ENCODE measurements at regions of chr3 and their contacts with region 1.

Region 1: DNA sequence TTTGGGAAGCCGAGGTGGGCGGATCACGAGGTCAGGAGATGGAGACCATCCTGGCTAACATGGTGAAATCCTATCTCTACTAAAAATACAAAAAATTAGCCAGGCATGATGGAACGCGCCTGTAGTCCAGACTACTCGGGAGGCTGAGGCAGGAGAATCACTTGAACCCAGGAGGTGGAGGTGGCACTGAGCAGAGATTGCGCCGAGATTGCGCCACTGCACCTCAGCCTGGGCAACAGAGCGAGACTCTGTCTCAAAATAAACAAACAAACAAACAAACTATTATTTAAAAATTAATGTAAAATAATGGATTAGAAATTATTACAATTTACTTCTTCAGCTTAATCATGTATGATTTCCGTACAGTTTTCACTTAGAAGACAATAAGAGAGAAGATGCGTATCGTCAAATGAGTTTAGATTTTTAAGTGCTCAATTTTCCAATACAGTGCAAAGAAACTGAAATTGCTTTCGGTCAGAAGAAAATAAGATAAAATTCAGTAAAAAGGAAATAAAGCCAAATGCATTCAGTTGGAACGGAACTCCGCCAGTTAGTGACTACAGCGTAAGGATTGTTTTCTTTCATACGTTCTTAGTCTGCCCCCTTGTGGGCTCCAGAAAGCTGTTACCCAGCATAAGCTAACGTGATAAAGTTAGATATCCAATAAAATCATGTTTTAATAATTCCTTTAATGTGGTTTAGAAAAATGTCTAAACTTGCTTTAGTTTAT is 24.8 kb downstream of the AADAC start:
- DNase-seq: peak; percentile 77
- ATAC-seq: peak; percentile 90
- H3K4me3 ChIP-seq: no peak overlapping the region; a peak in 1 of 6 replicates
- H3K27ac ChIP-seq: no peak overlapping the region
- H3K4me1 ChIP-seq: peaks cover 8% of the 10 kb centered on the region; the same call in 1 of the 2 replicates
- H3K27me3 ChIP-seq: no peaks in the 10 kb centered on the region
- CTCF ChIP-seq: peak; percentile 83
- EP300 ChIP-seq: no peak
- POLR2A ChIP-seq: no peak
- RAD21 ChIP-seq: peak; percentile 84

Region 2: GRCh38 chr3:151227807-151228665 is 610.7 kb before region 1 on chr3:
- CTCF ChIA-PET with region 1: no interaction called
- POLR2A ChIA-PET with region 1: no interaction called
- in situ Hi-C with region 1: no loop called
- intact Hi-C with region 1: loop called (anchors 1 kb)
- DNase-seq: peak; percentile 67
- ATAC-seq: peak; percentile 94
- H3K4me3 ChIP-seq: no peak overlapping the region
- H3K27ac ChIP-seq: no peak overlapping the region
- H3K4me1 ChIP-seq: peaks cover 34% of the 10 kb centered on the region
- H3K27me3 ChIP-seq: no peaks in the 10 kb centered on the region; a peak in 1 of 5 replicates
- CTCF ChIP-seq: peak; percentile 92
- EP300 ChIP-seq: no peak
- POLR2A ChIP-seq: no peak
- RAD21 ChIP-seq: peak; percentile 93

Region 3: GRCh38 chr3:151439652-151440129 is 399.1 kb before region 1 on chr3:
- CTCF ChIA-PET with region 1: interaction called, 34 read pairs
- POLR2A ChIA-PET with region 1: no interaction called
- in situ Hi-C with region 1: loop called (anchors 5 kb)
- intact Hi-C with region 1: loop called (anchors 1 kb)
- DNase-seq: peak; percentile 49
- ATAC-seq: peak; percentile 96
- H3K4me3 ChIP-seq: no peak overlapping the region
- H3K27ac ChIP-seq: no peak overlapping the region
- H3K4me1 ChIP-seq: no peaks in the 10 kb centered on the region
- H3K27me3 ChIP-seq: 0 out of 5 replicates have a peak, but pooled peaks cover 0 to 3% of the 10 kb centered on the region in 2 experiments
- CTCF ChIP-seq: peak; percentile 74
- EP300 ChIP-seq: no peak
- POLR2A ChIP-seq: no peak
- RAD21 ChIP-seq: peak; percentile 60

Region 4: DNA sequence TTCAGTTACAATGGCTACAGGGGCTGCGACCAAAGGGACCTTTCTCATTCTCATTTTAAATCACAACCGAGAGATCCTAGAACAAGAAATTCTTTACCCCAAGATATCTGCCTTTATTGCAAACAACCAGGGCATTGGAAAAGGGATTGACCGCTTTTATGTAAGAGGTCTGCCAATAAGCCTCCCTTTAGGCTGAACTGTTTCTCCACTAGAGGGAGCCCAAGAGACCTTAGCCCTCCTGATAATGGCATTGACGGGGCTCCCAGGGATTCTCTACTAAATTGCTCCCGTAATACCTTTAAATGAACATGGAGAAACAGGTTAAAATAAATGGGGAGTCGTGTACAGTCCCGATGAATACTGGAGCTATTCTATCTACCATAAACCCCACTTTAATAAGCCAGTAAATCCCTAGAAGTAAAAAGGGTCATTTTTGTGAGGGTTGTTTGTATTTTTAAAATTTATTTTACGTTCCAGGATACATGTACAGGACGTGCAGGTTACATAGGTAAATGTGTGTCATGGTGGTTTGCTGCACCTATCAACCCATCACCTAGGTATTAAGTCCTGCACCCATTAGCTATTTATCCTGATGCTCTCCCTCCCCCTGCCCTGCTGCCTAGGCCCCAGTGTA is 370.3 kb before region 1 on chr3:
- CTCF ChIA-PET with region 1: interaction called, 31 read pairs
- POLR2A ChIA-PET with region 1: no interaction called
- in situ Hi-C with region 1: loop called (anchors 10 kb)
- intact Hi-C with region 1: loop called (anchors 1 kb)
- DNase-seq: peak; percentile 63
- ATAC-seq: peak; percentile 95
- H3K4me3 ChIP-seq: no peak overlapping the region
- H3K27ac ChIP-seq: no peak overlapping the region
- H3K4me1 ChIP-seq: no peaks in the 10 kb centered on the region
- H3K27me3 ChIP-seq: peaks cover 0 to 4% of the 10 kb centered on the region in 2 experiments; a peak in 1 of 5 replicates
- CTCF ChIP-seq: peak; percentile 77
- EP300 ChIP-seq: no peak
- POLR2A ChIP-seq: no peak
- RAD21 ChIP-seq: 0 out of 2 replicates have a peak, but pooled peaks have one; percentile 28

Region 5: DNA sequence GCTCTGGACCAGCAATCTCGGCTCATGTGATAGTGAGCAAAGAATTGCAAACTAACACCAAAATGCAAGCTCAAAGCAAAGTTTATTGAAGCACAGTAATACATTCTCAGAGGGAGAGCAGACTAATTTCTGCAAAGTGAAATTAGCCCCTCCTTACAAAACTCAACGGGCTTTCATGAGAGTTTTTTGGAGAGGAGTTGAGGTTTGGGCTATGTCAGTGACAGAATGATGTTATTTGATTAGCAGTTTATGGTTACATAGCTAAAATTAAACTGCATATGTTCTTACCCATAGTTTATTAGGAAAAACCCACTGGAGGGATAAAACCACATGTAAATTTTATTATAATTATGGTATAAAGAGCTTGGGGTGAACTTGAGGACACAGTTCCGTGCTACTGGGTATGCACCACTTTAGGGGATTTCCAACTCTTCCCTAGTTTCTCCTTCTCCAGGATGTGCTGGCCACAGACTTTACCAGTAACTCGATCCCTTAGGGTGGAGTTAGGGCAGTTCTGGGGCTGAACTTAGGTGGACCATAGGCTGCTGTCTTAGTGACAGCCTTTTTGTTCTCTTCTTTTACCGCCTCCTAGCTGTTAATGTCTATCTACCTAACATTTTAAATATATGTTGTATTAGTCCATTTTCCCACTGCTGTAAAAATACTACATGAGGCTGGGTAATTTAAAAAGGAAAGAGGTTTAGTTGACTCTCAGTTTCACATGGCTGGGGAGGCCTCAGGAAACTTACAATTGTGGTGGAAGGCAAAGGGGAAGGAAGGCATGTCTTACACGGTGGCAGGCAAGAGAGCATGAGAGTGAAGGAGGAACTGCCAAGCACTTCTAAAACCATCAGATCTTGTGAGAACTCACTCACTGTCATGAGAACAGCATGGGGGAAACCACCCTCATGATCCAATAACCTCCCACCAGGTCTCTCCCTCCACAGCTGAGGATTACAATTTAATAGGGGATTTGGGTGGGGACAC is 113.9 kb before region 1 on chr3:
- CTCF ChIA-PET with region 1: no interaction called
- POLR2A ChIA-PET with region 1: no interaction called
- in situ Hi-C with region 1: no loop called
- intact Hi-C with region 1: loop called (anchors 5 kb)
- DNase-seq: no peak
- ATAC-seq: no peak
- H3K4me3 ChIP-seq: no peak overlapping the region
- H3K27ac ChIP-seq: no peak overlapping the region
- H3K4me1 ChIP-seq: peaks cover 11% of the 10 kb centered on the region
- H3K27me3 ChIP-seq: peaks cover 0 to 1% of the 10 kb centered on the region in 2 experiments; a peak in 2 of 5 replicates
- CTCF ChIP-seq: no peak
- EP300 ChIP-seq: no peak
- POLR2A ChIP-seq: no peak
- RAD21 ChIP-seq: no peak

Region 6: GRCh38 chr3:151770956-151771355 is 67.8 kb before region 1 on chr3:
- CTCF ChIA-PET with region 1: no interaction called
- POLR2A ChIA-PET with region 1: no interaction called
- in situ Hi-C with region 1: no loop called
- intact Hi-C with region 1: loop called (anchors 2 kb)
- DNase-seq: peak; percentile 88
- ATAC-seq: peak; percentile 88
- H3K4me3 ChIP-seq: peak overlapping the region; percentile 36 to 45 (median 45); a peak in 4 of 6 replicates
- H3K27ac ChIP-seq: peak overlapping the region; percentile 100
- H3K4me1 ChIP-seq: peaks cover 72% of the 10 kb centered on the region
- H3K27me3 ChIP-seq: no peaks in the 10 kb centered on the region
- CTCF ChIP-seq: peak; percentile 21; the same call in 1 of the 2 replicates
- EP300 ChIP-seq: peak; percentile 38 to 77; a peak in 3 of 4 replicates
- POLR2A ChIP-seq: peak; percentile 32 to 65; a peak in 3 of 4 replicates
- RAD21 ChIP-seq: peak; percentile 28; the same call in 1 of the 2 replicates

Region 7: GRCh38 chr3:151824546-151824945 is 14.2 kb before region 1 on chr3:
- CTCF ChIA-PET with region 1: no interaction called
- POLR2A ChIA-PET with region 1: no interaction called
- in situ Hi-C with region 1: no loop called
- intact Hi-C with region 1: no loop called
- DNase-seq: no peak
- ATAC-seq: no peak
- H3K4me3 ChIP-seq: no peak overlapping the region
- H3K27ac ChIP-seq: no peak overlapping the region
- H3K4me1 ChIP-seq: 0 out of 2 replicates have a peak, but pooled peaks cover 11% of the 10 kb centered on the region
- H3K27me3 ChIP-seq: no peaks in the 10 kb centered on the region
- CTCF ChIP-seq: no peak
- EP300 ChIP-seq: no peak
- POLR2A ChIP-seq: no peak
- RAD21 ChIP-seq: no peak